MCF 10A (cell line): ENCODE measurements at regions of chr1 and their contacts with region 1.

Region 1: DNA sequence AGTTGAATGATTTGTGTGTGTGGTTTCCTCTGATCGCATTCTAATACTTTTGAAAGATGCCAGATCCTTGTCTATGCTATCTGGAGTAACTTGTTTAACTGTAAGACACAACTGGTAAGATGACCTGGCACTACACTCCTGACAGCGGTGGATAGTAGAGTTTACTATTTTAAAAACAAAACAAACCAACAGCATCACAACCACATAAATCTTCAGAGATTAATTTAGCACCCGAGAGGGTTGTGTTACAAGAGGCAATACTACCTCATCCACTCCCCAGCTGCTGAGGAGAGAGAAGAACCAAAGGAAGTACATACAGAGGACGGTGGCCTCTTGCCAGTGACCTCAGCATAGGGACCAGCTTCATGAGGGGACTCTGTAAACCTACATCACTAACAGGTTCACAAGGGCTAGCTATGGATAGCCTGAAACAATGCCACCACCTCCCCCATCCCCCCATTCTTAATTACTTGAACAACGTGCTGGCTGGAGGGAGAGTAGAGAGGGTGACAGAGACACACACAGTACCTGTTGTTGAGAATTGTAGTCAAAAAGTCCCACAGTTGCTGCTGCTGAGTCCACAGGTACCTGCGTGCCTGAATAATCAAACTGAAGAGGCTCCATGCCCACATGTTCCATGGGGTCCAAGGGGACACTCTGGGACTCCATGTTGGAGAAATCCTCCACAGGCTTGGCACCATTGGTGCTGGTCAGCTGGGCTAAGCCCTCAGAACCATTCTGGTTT is 73.5 kb downstream of the PUM1 start:
- DNase-seq: no peak
- H3K4me3 Mint-ChIP-seq: no peak overlapping the region
- H3K27ac Mint-ChIP-seq: no peak overlapping the region
- H3K4me1 Mint-ChIP-seq: peaks cover 40% of the 10 kb centered on the region
- H3K27me3 Mint-ChIP-seq: no peaks in the 10 kb centered on the region
- CTCF ChIP-seq: no peak

Region 2: DNA sequence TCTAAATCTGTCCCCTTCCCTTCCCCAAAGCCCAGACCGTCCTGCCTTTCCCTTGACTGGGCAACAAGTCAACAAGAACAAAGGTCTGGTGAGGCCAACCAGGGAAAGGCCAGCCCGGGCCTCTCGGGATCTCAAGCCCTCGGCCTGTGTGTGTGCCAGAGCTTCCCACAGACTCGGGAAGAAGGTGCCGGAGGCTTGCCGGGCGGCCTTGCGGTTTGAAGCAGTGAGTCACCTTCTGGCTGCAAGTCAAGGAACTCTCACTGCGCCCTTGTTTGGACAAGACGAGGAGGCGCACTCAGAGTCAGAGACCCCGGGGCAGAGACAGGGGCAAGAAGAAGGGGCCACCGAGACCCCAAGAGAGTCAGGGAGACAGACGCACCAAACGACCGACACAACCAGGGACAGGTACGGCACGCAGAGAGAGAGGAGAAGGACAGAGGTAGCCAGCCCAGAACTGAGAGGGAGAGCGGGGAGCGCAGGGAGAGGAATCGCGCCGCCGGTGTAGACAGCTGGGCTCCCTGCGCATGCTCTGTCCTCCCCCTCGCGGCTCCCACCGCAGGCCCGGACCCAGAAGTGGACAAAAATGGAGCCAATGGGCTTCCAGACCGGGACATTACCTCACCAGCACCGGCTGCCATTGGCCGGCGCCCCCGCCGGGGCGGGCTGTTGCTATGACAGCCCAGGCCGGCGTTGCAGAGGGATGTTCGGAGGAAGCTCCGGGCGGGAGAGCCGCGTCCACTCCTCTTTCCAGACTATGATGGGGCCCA is 167.9 kb before region 1 on chr1:
- CTCF ChIA-PET with region 1: no interaction called
- POLR2A ChIA-PET with region 1: no interaction called
- intact Hi-C with region 1: no loop called
- DNase-seq: peak; percentile 99
- H3K4me3 Mint-ChIP-seq: peak overlapping the region; percentile 73
- H3K27ac Mint-ChIP-seq: peak overlapping the region; percentile 89
- H3K4me1 Mint-ChIP-seq: peaks cover 26% of the 10 kb centered on the region
- H3K27me3 Mint-ChIP-seq: no peaks in the 10 kb centered on the region
- CTCF ChIP-seq: no peak

Region 3: GRCh38 chr1:30911046-30911954 is 80.7 kb before region 1 on chr1:
- CTCF ChIA-PET with region 1: no interaction called
- POLR2A ChIA-PET with region 1: no interaction called
- intact Hi-C with region 1: no loop called
- DNase-seq: peak; percentile 91
- H3K4me3 Mint-ChIP-seq: no peak overlapping the region
- H3K27ac Mint-ChIP-seq: no peak overlapping the region
- H3K4me1 Mint-ChIP-seq: peaks cover 15% of the 10 kb centered on the region
- H3K27me3 Mint-ChIP-seq: no peaks in the 10 kb centered on the region
- CTCF ChIP-seq: peak; percentile 85

Region 4: DNA sequence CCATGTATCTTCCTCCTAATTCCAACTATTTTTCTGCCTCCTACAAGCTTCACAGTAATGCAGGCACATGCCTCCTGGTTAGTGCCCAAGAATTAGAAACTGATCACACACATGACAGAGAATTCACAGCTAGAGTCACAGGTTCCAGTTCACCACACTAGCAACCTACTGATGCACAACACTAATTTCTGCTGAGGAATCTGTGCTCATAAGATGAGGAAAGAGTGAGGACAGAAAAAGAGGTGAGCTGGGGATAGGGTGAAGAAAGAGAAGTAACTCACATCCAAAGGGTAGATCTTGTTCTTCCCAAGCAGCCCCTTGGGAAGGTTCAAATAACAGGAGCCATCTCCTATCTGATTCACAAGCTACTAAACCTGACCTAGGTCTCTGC is 12.2 kb after region 1 on chr1:
- CTCF ChIA-PET with region 1: interaction called, 3 read pairs
- POLR2A ChIA-PET with region 1: interaction called, 22 read pairs
- intact Hi-C with region 1: no loop called
- DNase-seq: no peak
- H3K4me3 Mint-ChIP-seq: no peak overlapping the region
- H3K27ac Mint-ChIP-seq: no peak overlapping the region
- H3K4me1 Mint-ChIP-seq: peaks cover 27% of the 10 kb centered on the region
- H3K27me3 Mint-ChIP-seq: no peaks in the 10 kb centered on the region
- CTCF ChIP-seq: no peak

Region 5: DNA sequence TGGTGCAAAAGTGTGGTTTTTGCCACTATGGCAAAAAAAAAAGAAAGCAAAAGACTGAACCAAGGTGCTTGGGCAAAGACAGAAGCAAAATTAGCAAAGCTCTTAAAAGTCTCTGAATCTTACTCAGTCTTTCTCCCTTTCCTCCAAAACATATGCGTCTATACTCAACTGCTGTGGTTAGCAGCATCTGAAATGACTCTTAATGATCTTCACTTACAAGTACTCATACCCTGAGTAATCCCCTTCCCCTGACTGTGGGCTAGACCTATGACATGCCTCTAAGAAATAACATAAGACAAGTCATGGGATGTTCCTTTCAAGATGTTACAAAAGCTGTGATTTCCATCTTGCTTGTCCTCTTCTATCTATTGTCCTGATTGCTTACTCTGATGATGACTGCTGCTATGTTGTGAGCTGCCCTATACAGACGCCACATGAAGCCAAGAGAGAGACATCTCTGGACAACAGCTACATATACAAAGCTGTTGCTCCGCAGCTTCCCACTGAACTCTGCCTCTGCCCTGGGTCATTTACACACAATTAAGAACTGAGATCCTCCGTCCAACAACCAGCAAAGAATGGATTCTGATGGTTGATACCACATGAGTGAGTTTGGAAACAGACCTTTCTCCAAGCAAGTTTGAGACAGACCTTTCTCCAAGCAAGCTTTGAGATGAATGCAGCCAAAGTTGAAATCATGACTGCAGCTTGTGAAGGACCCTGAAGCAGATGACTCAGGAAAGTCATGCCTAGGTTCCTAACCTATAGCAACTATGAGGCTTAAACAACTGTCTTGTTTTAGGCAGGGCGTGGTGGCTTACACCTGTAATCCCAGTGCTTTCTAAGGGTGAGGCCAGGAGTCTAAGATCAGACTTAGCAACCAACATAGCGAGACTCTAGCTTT is 18.3 kb after region 1 on chr1:
- CTCF ChIA-PET with region 1: interaction called, 3 read pairs
- POLR2A ChIA-PET with region 1: interaction called, 22 read pairs
- intact Hi-C with region 1: no loop called
- DNase-seq: peak; percentile 23
- H3K4me3 Mint-ChIP-seq: no peak overlapping the region
- H3K27ac Mint-ChIP-seq: no peak overlapping the region
- H3K4me1 Mint-ChIP-seq: peaks cover 60% of the 10 kb centered on the region
- H3K27me3 Mint-ChIP-seq: no peaks in the 10 kb centered on the region
- CTCF ChIP-seq: no peak

Region 6: GRCh38 chr1:31072304-31072746 is 80.3 kb after region 1 on chr1:
- CTCF ChIA-PET with region 1: no interaction called
- POLR2A ChIA-PET with region 1: no interaction called
- intact Hi-C with region 1: no loop called
- DNase-seq: no peak
- H3K4me3 Mint-ChIP-seq: no peak overlapping the region
- H3K27ac Mint-ChIP-seq: no peak overlapping the region
- H3K4me1 Mint-ChIP-seq: no peaks in the 10 kb centered on the region
- H3K27me3 Mint-ChIP-seq: no peaks in the 10 kb centered on the region
- CTCF ChIP-seq: no peak

Region 7: GRCh38 chr1:31422505-31423319 is 430.7 kb after region 1 on chr1:
- CTCF ChIA-PET with region 1: no interaction called
- POLR2A ChIA-PET with region 1: no interaction called
- intact Hi-C with region 1: no loop called
- DNase-seq: peak; percentile 91
- H3K4me3 Mint-ChIP-seq: peak overlapping the region; percentile 30
- H3K27ac Mint-ChIP-seq: peak overlapping the region; percentile 94
- H3K4me1 Mint-ChIP-seq: peaks cover 29% of the 10 kb centered on the region
- H3K27me3 Mint-ChIP-seq: no peaks in the 10 kb centered on the region
- CTCF ChIP-seq: peak; percentile 95